ENCODE measurements at regions of chr1 and their contacts with region 1.

Region 1: DNA sequence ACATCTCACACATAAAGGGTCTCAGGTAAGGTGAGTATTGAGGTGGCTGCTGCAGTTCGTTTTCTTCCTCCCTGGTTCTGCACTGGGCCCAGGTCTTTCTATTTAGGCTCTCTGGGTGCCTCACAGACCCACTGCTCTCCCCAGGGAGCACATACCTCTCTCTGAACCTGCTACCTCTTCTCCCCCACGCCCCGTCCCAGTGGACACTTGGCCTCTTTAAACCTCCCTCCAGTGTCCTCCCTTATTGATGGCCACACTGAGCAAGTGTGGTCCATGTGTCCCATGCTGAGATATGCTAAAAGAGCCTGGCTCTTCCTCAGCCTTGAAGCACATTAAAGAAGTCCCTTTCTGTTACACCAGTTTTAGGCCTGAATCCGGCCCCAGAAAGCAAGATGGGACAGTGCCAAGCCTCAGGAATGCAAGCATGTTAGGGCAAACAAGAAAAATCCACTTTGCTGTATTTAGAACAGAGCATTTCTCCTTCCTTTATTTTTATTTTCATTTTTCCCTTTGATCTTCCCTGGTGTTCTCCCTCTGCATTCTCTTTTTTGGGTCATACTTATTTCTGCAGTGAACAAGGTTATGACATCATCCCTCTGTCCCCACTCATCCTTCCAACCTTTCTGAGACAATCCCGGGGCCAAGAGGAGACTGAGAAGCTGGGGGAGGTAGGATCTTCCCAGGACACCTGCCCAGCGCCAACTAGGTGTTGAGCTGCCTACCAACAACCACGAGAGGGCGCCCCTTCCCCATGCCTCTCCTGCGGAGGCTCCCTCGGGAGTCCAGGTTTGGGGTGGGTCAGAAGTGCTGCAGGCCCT is 5.0 kb upstream of the CHI3L2 start:
- DNase-seq: peak; percentile 70 to 73
- ATAC-seq: peak in 3 of 4 donors; percentile 61 to 80 (median 75)
- H3K4me3 ChIP-seq: no peak overlapping the region
- H3K27ac ChIP-seq: no peak overlapping the region
- H3K4me1 ChIP-seq: no peaks in the 10 kb centered on the region
- H3K27me3 ChIP-seq: no peaks in the 10 kb centered on the region
- CTCF ChIP-seq: peak; percentile 69

Region 2: DNA sequence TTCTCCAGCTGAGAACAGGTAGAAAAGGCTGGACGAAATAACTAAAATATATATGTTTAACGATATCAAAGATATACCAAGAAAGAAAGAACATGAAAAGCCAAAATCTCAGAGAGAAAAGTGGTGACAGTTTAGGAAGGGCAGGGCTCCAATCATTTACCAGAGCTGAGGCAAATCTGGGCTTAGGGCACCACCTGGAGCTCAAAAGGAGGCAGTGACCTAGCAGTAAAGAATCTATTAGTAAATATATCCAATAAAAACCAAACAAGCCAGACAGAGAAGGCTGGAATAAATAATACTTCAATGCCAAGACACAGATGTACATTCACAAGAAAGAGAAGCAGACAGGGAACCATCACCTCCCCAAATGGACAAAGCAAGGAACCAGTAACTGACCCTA is 111.7 kb after region 1 on chr1:
- intact Hi-C with region 1: loop called in 1 of 2 experiments (anchors 2 kb)
- DNase-seq: no peak
- ATAC-seq: no peak
- H3K4me3 ChIP-seq: no peak overlapping the region
- H3K27ac ChIP-seq: no peak overlapping the region
- H3K4me1 ChIP-seq: no peaks in the 10 kb centered on the region
- H3K27me3 ChIP-seq: no peaks in the 10 kb centered on the region
- CTCF ChIP-seq: peak; percentile 39

Region 3: DNA sequence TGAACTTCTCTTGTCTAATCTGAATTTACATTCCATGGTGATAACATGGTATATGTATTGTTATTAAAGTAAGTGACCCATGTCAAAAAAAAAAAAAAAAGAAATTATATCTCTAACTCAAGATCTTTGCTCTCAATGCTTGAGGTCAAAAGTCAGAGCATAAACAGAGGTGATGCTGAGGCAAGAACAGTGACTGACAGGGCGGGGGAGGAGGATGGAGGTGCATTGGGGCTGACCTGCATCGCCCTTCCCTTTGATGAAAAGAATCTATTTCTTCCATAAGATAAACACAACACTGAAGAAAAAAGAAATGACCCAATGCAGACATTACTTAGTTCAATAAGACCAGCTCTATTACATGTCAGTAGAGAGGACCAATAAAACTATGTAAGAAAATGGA is 158.9 kb after region 1 on chr1:
- intact Hi-C with region 1: loop called in 1 of 2 experiments (anchors 10 kb)
- DNase-seq: no peak
- ATAC-seq: no peak
- H3K4me3 ChIP-seq: no peak overlapping the region
- H3K27ac ChIP-seq: no peak overlapping the region
- H3K4me1 ChIP-seq: no peaks in the 10 kb centered on the region
- H3K27me3 ChIP-seq: no peaks in the 10 kb centered on the region
- CTCF ChIP-seq: no peak

Region 4: GRCh38 chr1:111399792-111400610 is 177.5 kb after region 1 on chr1:
- intact Hi-C with region 1: loop called in 1 of 2 experiments (anchors 2 kb)
- DNase-seq: no peak
- ATAC-seq: no peak
- H3K4me3 ChIP-seq: no peak overlapping the region
- H3K27ac ChIP-seq: no peak overlapping the region
- H3K4me1 ChIP-seq: no peaks in the 10 kb centered on the region
- H3K27me3 ChIP-seq: peaks cover 0 to 7% (median 0%) of the 10 kb centered on the region in 3 donors
- CTCF ChIP-seq: peak; percentile 65

Region 5: GRCh38 chr1:111553196-111553595 is 330.7 kb after region 1 on chr1:
- intact Hi-C with region 1: no loop called
- DNase-seq: no peak
- ATAC-seq: no peak
- H3K4me3 ChIP-seq: no peak overlapping the region
- H3K27ac ChIP-seq: no peak overlapping the region
- H3K4me1 ChIP-seq: no peaks in the 10 kb centered on the region
- H3K27me3 ChIP-seq: no peaks in the 10 kb centered on the region
- CTCF ChIP-seq: no peak

Region 6: GRCh38 chr1:111769517-111770146 is 547.1 kb after region 1 on chr1:
- intact Hi-C with region 1: loop called in 1 of 2 experiments (anchors 10 kb)
- DNase-seq: no peak
- ATAC-seq: peak; percentile 82 to 97 (median 93)
- H3K4me3 ChIP-seq: peak overlapping the region; percentile 35
- H3K27ac ChIP-seq: peak overlapping the region; percentile 50
- H3K4me1 ChIP-seq: peaks cover 10% of the 10 kb centered on the region
- H3K27me3 ChIP-seq: no peaks in the 10 kb centered on the region
- CTCF ChIP-seq: peak; percentile 90